ENCODE measurements at regions of chr3 and their contacts with region 1.

Region 1: DNA sequence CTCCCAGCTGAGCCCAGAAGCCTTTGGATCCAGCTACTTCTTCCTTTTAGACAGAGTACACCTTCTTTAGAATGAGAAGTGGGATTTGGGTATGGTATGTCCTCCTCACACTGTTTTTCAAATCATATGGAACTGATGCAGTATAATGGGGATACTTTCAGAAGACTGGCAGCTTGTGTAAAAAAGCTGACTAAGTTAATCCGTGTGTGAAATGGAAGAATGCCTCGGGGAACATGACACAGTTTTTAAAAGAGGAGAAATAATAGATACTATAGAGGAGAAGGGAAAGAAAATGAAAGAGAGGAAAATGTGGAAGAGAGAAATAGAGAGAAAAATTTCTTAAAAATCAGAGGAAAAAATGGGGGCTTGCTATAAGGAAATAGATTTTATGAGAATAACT is 47.7 kb downstream of the TUSC7 start:
- DNase-seq: no peak
- H3K4me3 Mint-ChIP-seq: no peak overlapping the region
- H3K27ac Mint-ChIP-seq: no peak overlapping the region
- H3K4me1 Mint-ChIP-seq: no peaks in the 10 kb centered on the region
- H3K27me3 Mint-ChIP-seq: no peaks in the 10 kb centered on the region

Region 2: DNA sequence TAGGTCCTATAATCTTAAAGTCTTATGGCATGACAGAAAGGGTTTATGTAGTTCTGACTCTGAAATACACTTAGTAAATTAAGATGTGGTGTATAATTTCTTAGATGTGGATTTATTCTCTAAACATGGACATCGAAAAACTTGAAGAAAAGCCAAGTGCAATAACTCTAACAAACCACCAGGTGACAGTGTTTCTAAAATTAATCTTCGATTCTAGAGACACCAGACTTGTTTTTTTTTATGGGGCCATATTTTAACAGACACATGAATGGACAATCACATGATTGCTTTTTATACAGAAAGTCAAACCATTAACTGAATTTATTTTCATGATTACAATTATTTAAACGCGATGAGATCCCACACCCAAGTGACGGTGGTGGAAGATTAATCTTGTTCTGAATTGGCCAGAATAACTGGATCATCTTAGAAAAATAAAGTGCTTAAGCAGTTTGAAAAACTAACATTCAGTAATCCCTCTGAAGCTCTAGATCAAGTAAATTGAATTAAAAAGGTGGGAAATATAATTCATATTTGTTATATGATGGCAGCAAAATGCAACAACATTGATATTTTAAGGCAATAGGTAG is 617.1 kb before region 1 on chr3:
- intact Hi-C with region 1: loop called (anchors 1 kb)
- DNase-seq: no peak
- H3K4me3 Mint-ChIP-seq: no peak overlapping the region
- H3K27ac Mint-ChIP-seq: no peak overlapping the region
- H3K4me1 Mint-ChIP-seq: no peaks in the 10 kb centered on the region
- H3K27me3 Mint-ChIP-seq: no peaks in the 10 kb centered on the region